Transverse colon (tissue), 4 donors: ENCODE measurements at regions of chr14 and their contacts with region 1.

Region 1: DNA sequence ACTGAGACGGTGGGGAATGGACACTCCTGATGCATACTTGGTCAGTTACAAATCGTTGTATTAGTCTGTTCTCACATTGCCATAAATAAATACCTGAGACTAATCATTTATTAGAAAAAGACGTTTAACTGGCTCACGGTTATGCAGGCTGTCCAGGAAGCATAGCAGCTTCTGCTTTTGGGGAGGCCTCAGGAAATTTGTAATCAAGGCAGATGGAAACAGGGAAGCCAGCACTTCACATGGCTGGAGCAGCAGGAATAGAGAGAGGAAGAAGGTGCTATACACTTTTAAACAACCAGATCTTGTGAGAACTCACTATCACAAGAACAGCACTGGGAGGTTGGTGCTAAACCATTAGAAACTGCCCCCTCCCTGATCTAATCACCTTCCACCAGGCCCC is 418.2 kb downstream of the FLRT2 start:
- DNase-seq: no peak
- H3K4me3 ChIP-seq: no peak overlapping the region
- H3K27ac ChIP-seq: no peak overlapping the region
- H3K4me1 ChIP-seq: no peaks in the 10 kb centered on the region
- H3K27me3 ChIP-seq: no peaks in the 10 kb centered on the region
- CTCF ChIP-seq: no peak
- EP300 ChIP-seq: no peak
- POLR2A ChIP-seq: no peak

Region 2: GRCh38 chr14:85934123-85934885 is 13.8 kb before region 1 on chr14:
- in situ Hi-C with region 1: no loop called
- intact Hi-C with region 1: loop called (anchors 2 kb)
- DNase-seq: peak; percentile 23
- H3K4me3 ChIP-seq: peak overlapping the region in 3 of 4 donors; percentile 20 to 47 (median 22)
- H3K27ac ChIP-seq: peak overlapping the region; percentile 21 to 69 (median 62)
- H3K4me1 ChIP-seq: no peaks in the 10 kb centered on the region
- H3K27me3 ChIP-seq: no peaks in the 10 kb centered on the region
- CTCF ChIP-seq: no peak
- EP300 ChIP-seq: no peak
- POLR2A ChIP-seq: no peak

Region 3: DNA sequence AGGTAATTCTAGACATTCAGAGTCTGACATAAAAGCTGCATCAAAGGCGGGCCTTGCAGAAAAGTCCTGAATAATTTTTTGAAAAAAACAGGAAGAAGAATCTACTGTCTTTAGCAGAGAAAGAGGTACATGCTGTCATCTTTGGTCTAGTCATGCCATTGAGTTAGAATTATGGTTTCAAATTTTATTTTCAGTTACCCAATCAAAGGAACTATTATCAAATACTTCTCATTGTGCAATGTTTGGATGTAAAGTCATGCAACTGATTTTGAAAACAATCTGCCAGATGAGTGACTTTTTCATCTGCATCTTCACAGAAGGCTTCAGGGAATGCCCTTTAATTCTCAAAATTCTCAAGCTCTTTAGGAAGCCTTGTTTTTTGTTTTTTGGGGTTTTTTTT is 385.3 kb after region 1 on chr14:
- in situ Hi-C with region 1: no loop called
- intact Hi-C with region 1: no loop called
- DNase-seq: no peak
- H3K4me3 ChIP-seq: no peak overlapping the region
- H3K27ac ChIP-seq: no peak overlapping the region
- H3K4me1 ChIP-seq: no peaks in the 10 kb centered on the region
- H3K27me3 ChIP-seq: no peaks in the 10 kb centered on the region
- CTCF ChIP-seq: no peak
- EP300 ChIP-seq: no peak
- POLR2A ChIP-seq: no peak